ENCODE measurements at regions of chr3 and their contacts with region 1.

Region 1: GRCh38 chr3:108406661-108407206 is 103.7 kb downstream of the MYH15 start:
- DNase-seq: peak; percentile 74
- ATAC-seq: peak; percentile 89
- H3K4me3 ChIP-seq: no peak overlapping the region
- H3K27ac ChIP-seq: no peak overlapping the region
- H3K4me1 ChIP-seq: peaks cover 9% of the 10 kb centered on the region
- H3K27me3 ChIP-seq: no peaks in the 10 kb centered on the region
- CTCF ChIP-seq: peak; percentile 80

Region 2: GRCh38 chr3:108153451-108153981 is 253.2 kb before region 1 on chr3:
- CTCF ChIA-PET with region 1: no interaction called
- POLR2A ChIA-PET with region 1: no interaction called
- intact Hi-C with region 1: loop called (anchors 1 kb)
- DNase-seq: peak; percentile 71
- ATAC-seq: peak; percentile 70; the same call in 1 of the 2 replicates
- H3K4me3 ChIP-seq: no peak overlapping the region
- H3K27ac ChIP-seq: no peak overlapping the region
- H3K4me1 ChIP-seq: peaks cover 9% of the 10 kb centered on the region; the same call in 1 of the 2 replicates
- H3K27me3 ChIP-seq: no peaks in the 10 kb centered on the region
- CTCF ChIP-seq: peak; percentile 76

Region 3: DNA sequence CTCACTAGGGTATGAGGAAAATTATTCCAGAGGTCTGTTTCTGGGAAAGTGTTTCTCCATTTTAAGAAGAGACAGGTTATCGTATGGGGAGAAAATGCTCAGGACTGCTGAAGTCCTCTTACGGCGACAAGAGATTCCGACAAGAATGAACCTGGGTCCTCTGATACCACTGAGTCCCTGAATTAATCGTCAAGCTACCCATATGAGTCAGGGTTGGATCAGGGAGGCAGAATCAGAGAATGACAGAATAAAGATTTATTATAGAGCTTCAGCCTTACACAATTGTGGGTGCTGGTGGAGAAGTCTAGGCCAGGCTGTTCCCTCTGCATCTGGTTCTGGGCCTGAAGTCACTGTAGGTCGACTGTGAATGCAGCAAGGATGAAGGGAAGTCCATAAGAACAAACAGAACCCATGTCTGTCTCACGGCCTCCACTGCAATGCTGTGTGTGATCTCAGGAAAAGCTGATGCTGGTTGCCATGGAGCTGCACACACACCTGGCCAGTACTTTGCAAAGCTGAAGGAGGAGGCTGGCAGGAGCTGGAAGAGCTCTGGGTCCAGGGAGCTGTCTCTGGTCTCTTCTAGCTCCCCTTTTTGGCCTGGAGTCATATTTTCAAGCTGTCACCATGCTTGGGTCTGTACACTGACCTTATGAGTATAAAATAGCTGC is 26.5 kb before region 1 on chr3:
- CTCF ChIA-PET with region 1: no interaction called
- POLR2A ChIA-PET with region 1: no interaction called
- intact Hi-C with region 1: no loop called
- DNase-seq: no peak
- ATAC-seq: no peak
- H3K4me3 ChIP-seq: no peak overlapping the region
- H3K27ac ChIP-seq: no peak overlapping the region
- H3K4me1 ChIP-seq: peaks cover 22% of the 10 kb centered on the region
- H3K27me3 ChIP-seq: no peaks in the 10 kb centered on the region
- CTCF ChIP-seq: no peak